Transverse colon (tissue), 4 donors: ENCODE measurements at regions of chr2 and their contacts with region 1.

Region 1: DNA sequence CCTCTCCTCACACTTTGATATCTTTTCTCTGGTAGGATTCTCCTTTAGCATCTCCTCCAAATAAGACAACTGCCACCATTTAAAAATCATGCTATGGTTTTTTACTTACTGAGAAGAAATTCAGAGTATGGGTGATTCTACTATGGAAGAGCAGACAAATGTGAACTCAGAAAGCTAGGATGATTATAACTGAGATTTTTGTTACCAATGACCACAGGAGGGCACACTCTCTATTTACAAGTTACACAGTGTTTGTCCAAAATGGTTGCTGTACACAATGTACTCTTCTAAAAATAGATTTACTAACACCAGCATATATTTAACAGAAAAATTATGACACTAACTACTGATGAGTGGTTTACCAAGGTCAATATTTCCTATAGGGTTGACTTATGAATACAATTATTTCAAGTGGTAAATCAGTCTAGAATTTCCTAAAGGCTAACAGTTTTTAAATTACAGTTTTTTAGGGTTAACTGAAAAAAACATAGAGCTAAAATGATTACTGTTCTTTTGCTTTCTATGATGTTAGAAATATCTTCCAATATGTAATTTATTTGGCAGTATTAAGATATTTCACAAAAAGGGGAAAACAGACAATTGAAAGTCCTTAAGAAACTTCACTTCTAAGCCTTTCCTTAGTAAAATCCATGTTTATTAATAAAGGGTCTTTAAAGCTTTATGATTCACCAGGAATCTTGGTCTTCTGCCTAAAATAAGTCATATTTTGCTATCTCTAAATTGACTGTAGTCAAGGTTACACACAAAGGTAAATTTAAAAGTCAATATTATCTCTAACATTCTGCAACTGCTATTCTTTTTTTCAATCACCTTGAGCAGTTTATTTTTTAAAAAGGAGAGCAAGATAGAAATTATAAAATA is 57.2 kb downstream of the MAP4K3 start:
- DNase-seq: no peak
- H3K4me3 ChIP-seq: no peak overlapping the region
- H3K27ac ChIP-seq: peak overlapping the region; percentile 49 to 71 (median 64)
- H3K4me1 ChIP-seq: peaks cover 13 to 34% (median 22%) of the 10 kb centered on the region in 4 donors
- H3K27me3 ChIP-seq: no peaks in the 10 kb centered on the region
- CTCF ChIP-seq: peak; percentile 53 to 69 (median 56)
- EP300 ChIP-seq: no peak
- POLR2A ChIP-seq: no peak

Region 2: DNA sequence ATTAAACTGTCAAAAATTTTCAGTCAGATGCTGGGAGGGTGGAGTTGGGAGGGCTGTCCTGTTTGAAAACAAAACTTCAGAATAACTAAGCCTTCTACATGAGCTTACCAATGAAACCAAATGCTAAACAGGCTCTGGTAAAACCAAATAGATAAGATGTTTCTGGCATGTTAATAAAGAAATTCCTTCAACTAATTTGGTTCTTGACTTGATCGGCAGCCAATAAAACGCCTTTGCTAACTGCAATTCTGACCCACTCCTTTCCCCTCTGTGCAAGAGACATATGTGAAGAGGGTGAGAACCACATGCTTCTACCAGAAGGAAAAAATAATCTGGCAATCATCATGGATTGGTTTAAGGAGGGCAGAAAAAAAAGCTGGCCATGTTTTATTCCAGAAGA is 36.3 kb after region 1 on chr2:
- in situ Hi-C with region 1: no loop called
- intact Hi-C with region 1: no loop called
- DNase-seq: no peak
- H3K4me3 ChIP-seq: no peak overlapping the region
- H3K27ac ChIP-seq: no peak overlapping the region
- H3K4me1 ChIP-seq: peaks cover 4 to 58% (median 17%) of the 10 kb centered on the region in 4 donors
- H3K27me3 ChIP-seq: no peaks in the 10 kb centered on the region
- CTCF ChIP-seq: no peak
- EP300 ChIP-seq: no peak
- POLR2A ChIP-seq: no peak

Region 3: GRCh38 chr2:39436592-39437510 is 57.0 kb after region 1 on chr2 and contains the start of gene MAP4K3:
- in situ Hi-C with region 1: no loop called
- intact Hi-C with region 1: loop called (anchors 10 kb)
- DNase-seq: peak; percentile 95
- H3K4me3 ChIP-seq: peak within 1 kb of the TSS; percentile 68 to 96 (median 92)
- H3K27ac ChIP-seq: peak within 1 kb of the TSS; percentile 88 to 98 (median 97)
- H3K4me1 ChIP-seq: peaks cover 19 to 53% (median 36%) of the 10 kb centered on the region in 4 donors
- H3K27me3 ChIP-seq: no peaks in the 10 kb centered on the region
- CTCF ChIP-seq: no peak
- EP300 ChIP-seq: no peak
- POLR2A ChIP-seq: peak; percentile 84
- total RNA-seq, gene MAP4K3: 42.6 to 131 (median 91.8) TPM

Region 4: GRCh38 chr2:39513641-39514094 is 133.8 kb after region 1 on chr2:
- in situ Hi-C with region 1: no loop called
- intact Hi-C with region 1: loop called (anchors 10 kb)
- DNase-seq: peak; percentile 58
- H3K4me3 ChIP-seq: no peak overlapping the region
- H3K27ac ChIP-seq: peak overlapping the region; percentile 61 to 81 (median 70)
- H3K4me1 ChIP-seq: peaks cover 18 to 62% (median 28%) of the 10 kb centered on the region in 4 donors
- H3K27me3 ChIP-seq: no peaks in the 10 kb centered on the region
- CTCF ChIP-seq: peak; percentile 41 to 58 (median 48)
- EP300 ChIP-seq: no peak
- POLR2A ChIP-seq: no peak